A673 (cell line): ENCODE measurements at regions of chr12 and their contacts with region 1.

Region 1: GRCh38 chr12:69639400-69640016 is 28.8 kb upstream of the LRRC10 start:
- DNase-seq: peak; percentile 86
- H3K4me3 ChIP-seq: no peak overlapping the region
- H3K27ac ChIP-seq: no peak overlapping the region
- H3K4me1 ChIP-seq: no peaks in the 10 kb centered on the region
- H3K27me3 ChIP-seq: no peaks in the 10 kb centered on the region
- CTCF ChIP-seq: peak; percentile 91

Region 2: GRCh38 chr12:69290545-69291277 is 348.8 kb before region 1 on chr12:
- CTCF ChIA-PET with region 1: interaction called, 3 read pairs
- POLR2A ChIA-PET with region 1: no interaction called
- intact Hi-C with region 1: loop called (anchors 10 kb)
- DNase-seq: peak; percentile 91
- H3K4me3 ChIP-seq: no peak overlapping the region
- H3K27ac ChIP-seq: no peak overlapping the region
- H3K4me1 ChIP-seq: no peaks in the 10 kb centered on the region
- H3K27me3 ChIP-seq: peaks cover 10% of the 10 kb centered on the region
- CTCF ChIP-seq: peak; percentile 94

Region 3: DNA sequence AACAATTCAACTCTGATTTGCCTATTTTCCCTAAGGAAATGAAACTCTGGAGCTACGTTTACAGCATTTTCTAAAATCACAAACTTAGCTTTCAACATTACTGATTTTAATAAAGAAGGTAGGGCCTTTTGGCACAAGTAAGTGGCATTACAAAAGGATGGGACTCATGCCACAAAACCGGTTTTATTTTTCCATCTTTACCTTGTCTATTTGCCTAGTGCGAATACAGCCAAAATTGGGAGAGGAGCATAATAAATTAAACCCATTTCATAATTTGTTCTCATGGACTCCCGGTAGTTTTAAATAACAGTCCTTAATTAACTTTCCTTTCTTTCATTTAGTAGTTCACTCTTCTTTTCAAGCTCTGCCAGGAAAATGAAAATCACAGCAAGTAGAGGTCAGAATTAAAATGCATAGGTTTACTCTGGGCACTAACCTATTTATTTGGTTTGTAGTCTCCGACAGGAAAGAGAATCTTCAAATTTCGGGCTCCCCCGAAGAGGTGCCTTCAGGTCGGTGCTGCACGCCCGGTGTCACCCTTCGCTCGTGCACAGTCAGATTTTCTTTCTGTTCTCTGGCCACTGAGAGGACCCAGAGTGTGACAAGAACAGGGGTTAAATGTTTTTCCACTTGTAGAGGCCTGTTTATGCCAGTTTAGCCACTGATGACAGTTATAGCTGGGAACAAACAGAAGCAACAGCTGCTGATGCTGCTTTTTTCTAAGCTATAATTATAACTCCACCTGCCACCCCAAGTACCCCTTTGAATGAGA is 59.4 kb after region 1 on chr12 and contains the start of gene BEST3:
- CTCF ChIA-PET with region 1: no interaction called
- POLR2A ChIA-PET with region 1: no interaction called
- intact Hi-C with region 1: no loop called
- DNase-seq: no peak
- H3K4me3 ChIP-seq: no peak within 1 kb of the TSS
- H3K27ac ChIP-seq: no peak within 1 kb of the TSS
- H3K4me1 ChIP-seq: no peaks in the 10 kb centered on the region
- H3K27me3 ChIP-seq: no peaks in the 10 kb centered on the region
- CTCF ChIP-seq: no peak
- total RNA-seq, gene BEST3: 0.50 and 0.69 TPM in 2 replicates